Left cardiac atrium (tissue), 4 donors: ENCODE measurements at regions of chr14 and their contacts with region 1.

Region 1: GRCh38 chr14:88551094-88551870 is 3.5 kb downstream of the PTPN21 start:
- DNase-seq: peak; percentile 87
- ATAC-seq: peak; percentile 77 to 80

Region 2: GRCh38 chr14:88492272-88493089 is 58.8 kb before region 1 on chr14:
- intact Hi-C with region 1: loop called (anchors 2 to 10 kb)
- DNase-seq: peak; percentile 44
- ATAC-seq: peak; percentile 82

Region 3: GRCh38 chr14:88576222-88576621 is 24.9 kb after region 1 on chr14:
- intact Hi-C with region 1: no loop called
- DNase-seq: no peak
- ATAC-seq: no peak

Region 4: GRCh38 chr14:88613552-88614010 is 62.3 kb after region 1 on chr14:
- intact Hi-C with region 1: no loop called
- DNase-seq: no peak
- ATAC-seq: peak in 1 of 2 donors; percentile 61

Region 5: DNA sequence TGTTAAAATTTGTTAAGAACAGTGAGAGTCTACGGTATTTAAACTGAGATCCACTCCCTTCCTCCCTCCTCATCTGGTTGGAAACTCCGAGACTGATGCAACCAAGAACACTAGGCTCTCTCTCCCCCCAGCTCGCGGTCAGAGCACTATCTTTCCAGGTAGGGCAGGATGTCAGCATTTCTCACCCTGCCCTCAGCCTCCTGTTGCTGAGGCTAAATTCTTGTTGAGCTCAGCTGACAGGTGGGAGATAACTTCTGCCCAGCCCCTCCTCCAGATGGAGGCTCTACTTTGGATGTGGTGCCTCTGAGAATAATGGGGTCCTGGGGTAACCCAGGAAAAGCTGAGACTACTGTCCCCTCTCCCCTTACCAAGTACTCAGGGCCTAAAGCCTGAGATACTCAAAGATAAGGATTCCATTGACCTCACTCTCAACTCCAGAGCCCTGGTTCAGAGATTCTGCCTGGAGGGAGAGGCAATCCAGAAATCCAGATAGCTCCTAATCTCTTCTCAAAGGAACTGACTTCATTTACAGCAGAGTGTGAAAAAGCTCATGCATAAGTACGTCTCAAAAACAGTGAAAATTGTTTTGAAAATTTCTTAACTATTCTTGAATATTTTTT is 131.3 kb after region 1 on chr14:
- intact Hi-C with region 1: no loop called
- DNase-seq: no peak
- ATAC-seq: peak in 1 of 2 donors; percentile 66